Activated B cell treated with CpG ODN at 0.5 μM for 24 hours (primary cell): ENCODE measurements at regions of chr12 and their contacts with region 1.

Region 1: DNA sequence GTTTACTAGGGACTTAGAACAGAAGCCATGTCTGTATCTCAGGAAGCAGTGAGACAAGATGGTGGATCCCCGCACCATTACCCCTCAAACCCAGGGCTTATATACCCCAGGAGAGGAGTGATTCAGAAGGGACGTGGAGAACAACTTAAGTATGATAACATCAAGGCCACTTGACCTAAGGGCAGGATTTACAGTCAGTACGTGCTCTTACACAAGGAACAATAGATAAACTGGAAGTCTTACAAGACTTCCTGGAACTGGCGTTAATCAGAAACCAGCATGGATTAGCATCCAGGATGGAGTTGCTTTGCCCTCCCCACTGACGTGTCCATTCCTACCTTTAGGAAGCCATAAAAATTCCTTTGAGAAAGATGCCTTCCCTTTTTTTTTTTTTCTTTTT is 8.6 kb upstream of the ETFBKMT start:
- DNase-seq: no peak
- ATAC-seq: no peak
- H3K4me3 Mint-ChIP-seq: no peak overlapping the region
- H3K27ac Mint-ChIP-seq: no peak overlapping the region
- H3K4me1 Mint-ChIP-seq: peaks cover 26% of the 10 kb centered on the region
- H3K27me3 Mint-ChIP-seq: no peaks in the 10 kb centered on the region
- CTCF ChIP-seq: no peak

Region 2: DNA sequence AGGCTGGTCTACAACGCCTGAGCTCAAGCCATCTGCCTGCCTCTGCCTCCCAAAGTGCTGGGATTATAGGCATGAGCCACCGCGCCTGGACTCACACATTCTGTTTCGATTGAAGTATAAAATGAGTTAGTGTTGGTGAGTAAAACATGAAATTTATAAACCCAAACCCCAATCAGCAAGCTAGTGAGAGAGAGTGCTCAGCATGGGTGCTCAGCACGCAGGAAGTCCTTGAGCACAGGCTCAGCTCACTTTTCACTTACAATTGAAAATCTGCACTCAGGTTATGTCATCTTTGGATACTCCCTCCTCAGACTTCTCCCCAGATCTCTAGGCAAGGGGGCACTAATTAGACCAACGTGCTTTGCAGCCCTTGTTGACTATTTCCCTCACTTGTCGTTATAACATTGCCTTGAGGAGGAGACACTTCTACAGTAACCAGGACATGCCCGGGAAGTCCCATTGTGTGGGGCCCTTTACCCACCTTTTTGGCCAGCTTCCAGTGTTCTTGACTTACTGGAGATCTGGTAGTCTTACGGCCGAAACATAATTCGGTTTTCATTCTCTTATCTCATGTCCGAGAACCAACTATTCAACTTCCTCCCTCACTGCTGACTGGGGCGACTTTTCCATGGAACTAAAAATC is 146.4 kb after region 1 on chr12:
- CTCF ChIA-PET with region 1: no interaction called
- POLR2A ChIA-PET with region 1: no interaction called
- intact Hi-C with region 1: no loop called
- DNase-seq: no peak
- ATAC-seq: no peak
- H3K4me3 Mint-ChIP-seq: no peak overlapping the region
- H3K27ac Mint-ChIP-seq: peak overlapping the region; percentile 27
- H3K4me1 Mint-ChIP-seq: peaks cover 22% of the 10 kb centered on the region
- H3K27me3 Mint-ChIP-seq: no peaks in the 10 kb centered on the region
- CTCF ChIP-seq: no peak

Region 3: DNA sequence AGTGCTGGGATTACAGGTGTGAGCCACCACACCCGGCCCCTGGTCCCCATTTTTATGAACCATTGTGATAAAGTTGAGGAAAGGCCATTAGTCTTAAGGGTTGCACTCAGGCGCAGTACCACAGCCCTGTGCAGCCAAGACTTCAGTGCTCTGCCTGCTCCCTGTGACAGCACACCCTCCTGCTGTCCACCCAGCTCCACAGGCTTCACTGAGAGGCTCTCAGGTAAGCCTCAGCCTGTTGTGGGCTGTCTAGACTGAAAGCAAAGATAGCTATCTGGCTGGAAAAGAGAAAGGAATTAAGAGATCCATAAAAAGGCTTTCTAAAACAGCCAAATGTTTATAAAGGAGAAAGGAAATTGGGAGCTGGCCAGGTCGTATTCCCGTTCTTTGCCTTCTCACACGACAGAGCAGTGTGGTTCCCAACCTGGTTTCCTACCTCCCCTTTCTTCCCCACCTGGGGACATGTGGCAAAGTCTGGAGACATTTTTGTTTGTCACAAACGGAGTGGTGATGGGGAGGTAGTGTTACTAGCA is 1009.0 kb after region 1 on chr12:
- CTCF ChIA-PET with region 1: interaction called, 5 read pairs
- POLR2A ChIA-PET with region 1: no interaction called
- intact Hi-C with region 1: loop called (anchors 5 kb)
- DNase-seq: no peak
- ATAC-seq: no peak
- H3K4me3 Mint-ChIP-seq: no peak overlapping the region
- H3K27ac Mint-ChIP-seq: no peak overlapping the region
- H3K4me1 Mint-ChIP-seq: peaks cover 2% of the 10 kb centered on the region
- H3K27me3 Mint-ChIP-seq: no peaks in the 10 kb centered on the region
- CTCF ChIP-seq: no peak